ENCODE measurements at regions of chr22 and their contacts with region 1.

Region 1: DNA sequence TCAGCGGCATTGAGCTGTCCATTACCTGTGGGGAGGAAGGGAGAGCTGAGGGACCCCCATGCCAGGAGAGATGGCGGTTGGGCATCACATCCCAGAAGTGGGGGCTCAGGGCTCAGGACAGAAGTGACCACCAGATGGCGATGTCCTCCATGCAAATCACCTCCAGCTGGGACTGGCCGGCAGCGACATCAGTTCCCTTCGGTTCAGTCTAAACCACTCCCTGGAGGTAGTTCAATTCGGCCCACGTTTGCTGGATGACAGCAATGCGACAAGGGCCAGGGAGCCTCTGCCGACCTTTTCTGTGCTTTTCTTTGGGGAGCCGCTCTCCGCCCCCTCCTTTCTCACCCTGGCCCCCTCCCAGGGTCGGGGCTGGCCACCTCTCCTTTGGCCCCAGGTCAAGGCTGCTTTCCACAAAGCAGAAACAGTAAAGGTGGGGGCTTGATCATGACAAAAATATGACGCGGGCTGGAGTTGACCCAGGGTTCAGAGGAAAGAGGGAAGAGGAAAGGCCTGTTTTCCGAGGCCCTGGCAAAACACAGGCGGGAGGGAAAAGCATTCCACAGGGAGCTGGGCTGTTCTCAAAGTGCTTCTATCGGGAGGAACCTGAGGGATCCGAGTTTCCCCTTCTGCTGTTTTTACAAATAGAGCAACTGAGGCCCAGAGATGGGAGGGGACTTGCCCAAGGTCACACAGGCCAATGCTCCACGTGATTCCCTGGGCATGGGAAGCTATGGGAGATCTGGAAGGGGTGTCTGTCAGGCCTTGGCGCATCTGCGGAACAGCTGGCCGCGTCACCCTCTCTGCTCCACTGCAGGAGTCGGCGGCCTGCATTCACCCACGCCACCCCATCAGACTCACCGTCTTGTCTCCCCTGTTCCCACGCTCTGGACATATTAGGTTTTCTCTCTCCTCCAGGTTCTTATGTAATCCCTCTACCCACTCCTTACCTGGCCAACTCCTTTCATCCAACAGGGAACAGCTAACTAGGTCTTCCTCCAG is 54.7 kb downstream of the FBXO7 start:
- DNase-seq: peak; percentile 90
- H3K4me3 ChIP-seq: no peak overlapping the region
- H3K27ac ChIP-seq: no peak overlapping the region
- H3K4me1 ChIP-seq: peaks cover 10 to 14% of the 10 kb centered on the region in 2 experiments; a peak in 3 of 4 replicates
- H3K27me3 ChIP-seq: no peaks in the 10 kb centered on the region
- CTCF ChIP-seq: peak; percentile 86
- EP300 ChIP-seq: no peak
- RAD21 ChIP-seq: peak; percentile 97

Region 2: GRCh38 chr22:32518848-32519247 is 10.4 kb before region 1 on chr22:
- CTCF ChIA-PET with region 1: interaction called, 41 read pairs
- POLR2A ChIA-PET with region 1: no interaction called
- DNase-seq: no peak
- H3K4me3 ChIP-seq: no peak overlapping the region
- H3K27ac ChIP-seq: no peak overlapping the region
- H3K4me1 ChIP-seq: peaks cover 0 to 2% of the 10 kb centered on the region in 2 experiments; a peak in 1 of 4 replicates
- H3K27me3 ChIP-seq: no peaks in the 10 kb centered on the region
- CTCF ChIP-seq: peak; percentile 26; the same call in 1 of the 2 replicates
- EP300 ChIP-seq: no peak
- RAD21 ChIP-seq: no peak

Region 3: DNA sequence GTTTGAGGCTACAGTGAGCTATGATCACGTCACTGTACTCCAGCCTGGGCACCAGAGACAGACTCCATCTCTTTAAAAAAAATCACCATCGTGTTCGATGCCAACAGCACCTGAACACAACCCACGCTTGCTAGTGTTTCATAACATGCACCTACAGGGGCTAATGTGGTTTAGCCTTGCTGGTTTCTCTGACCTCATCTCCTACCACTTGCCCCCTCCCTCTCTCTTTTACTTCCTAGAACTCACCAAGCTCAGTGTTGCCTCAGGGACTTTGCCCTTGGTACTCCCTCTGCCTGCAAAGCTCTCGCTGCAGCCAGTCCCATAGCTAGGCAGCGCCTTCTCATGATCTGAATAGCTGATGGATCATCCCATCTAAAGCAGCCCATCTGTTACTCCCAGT is 45.1 kb after region 1 on chr22:
- CTCF ChIA-PET with region 1: interaction called, 14 read pairs
- POLR2A ChIA-PET with region 1: no interaction called
- DNase-seq: no peak
- H3K4me3 ChIP-seq: no peak overlapping the region
- H3K27ac ChIP-seq: no peak overlapping the region
- H3K4me1 ChIP-seq: peaks cover 0 to 21% of the 10 kb centered on the region in 2 experiments; a peak in 2 of 4 replicates
- H3K27me3 ChIP-seq: no peaks in the 10 kb centered on the region
- CTCF ChIP-seq: no peak
- EP300 ChIP-seq: no peak
- RAD21 ChIP-seq: no peak

Region 4: GRCh38 chr22:32637951-32638350 is 108.7 kb after region 1 on chr22:
- CTCF ChIA-PET with region 1: no interaction called
- POLR2A ChIA-PET with region 1: no interaction called
- DNase-seq: no peak
- H3K4me3 ChIP-seq: no peak overlapping the region
- H3K27ac ChIP-seq: no peak overlapping the region
- H3K4me1 ChIP-seq: no peaks in the 10 kb centered on the region; a peak in 1 of 4 replicates
- H3K27me3 ChIP-seq: no peaks in the 10 kb centered on the region
- CTCF ChIP-seq: no peak
- EP300 ChIP-seq: no peak
- RAD21 ChIP-seq: no peak

Region 5: GRCh38 chr22:32796865-32797573 is 267.7 kb after region 1 on chr22:
- CTCF ChIA-PET with region 1: interaction called, 93 read pairs
- POLR2A ChIA-PET with region 1: no interaction called
- DNase-seq: peak; percentile 76
- H3K4me3 ChIP-seq: peak overlapping the region in 1 of 2 experiments; percentile 11; a peak in 1 of 4 replicates
- H3K27ac ChIP-seq: no peak overlapping the region
- H3K4me1 ChIP-seq: peaks cover 0 to 8% of the 10 kb centered on the region in 2 experiments; a peak in 1 of 4 replicates
- H3K27me3 ChIP-seq: no peaks in the 10 kb centered on the region
- CTCF ChIP-seq: peak; percentile 87
- EP300 ChIP-seq: no peak
- RAD21 ChIP-seq: peak; percentile 79

Region 6: DNA sequence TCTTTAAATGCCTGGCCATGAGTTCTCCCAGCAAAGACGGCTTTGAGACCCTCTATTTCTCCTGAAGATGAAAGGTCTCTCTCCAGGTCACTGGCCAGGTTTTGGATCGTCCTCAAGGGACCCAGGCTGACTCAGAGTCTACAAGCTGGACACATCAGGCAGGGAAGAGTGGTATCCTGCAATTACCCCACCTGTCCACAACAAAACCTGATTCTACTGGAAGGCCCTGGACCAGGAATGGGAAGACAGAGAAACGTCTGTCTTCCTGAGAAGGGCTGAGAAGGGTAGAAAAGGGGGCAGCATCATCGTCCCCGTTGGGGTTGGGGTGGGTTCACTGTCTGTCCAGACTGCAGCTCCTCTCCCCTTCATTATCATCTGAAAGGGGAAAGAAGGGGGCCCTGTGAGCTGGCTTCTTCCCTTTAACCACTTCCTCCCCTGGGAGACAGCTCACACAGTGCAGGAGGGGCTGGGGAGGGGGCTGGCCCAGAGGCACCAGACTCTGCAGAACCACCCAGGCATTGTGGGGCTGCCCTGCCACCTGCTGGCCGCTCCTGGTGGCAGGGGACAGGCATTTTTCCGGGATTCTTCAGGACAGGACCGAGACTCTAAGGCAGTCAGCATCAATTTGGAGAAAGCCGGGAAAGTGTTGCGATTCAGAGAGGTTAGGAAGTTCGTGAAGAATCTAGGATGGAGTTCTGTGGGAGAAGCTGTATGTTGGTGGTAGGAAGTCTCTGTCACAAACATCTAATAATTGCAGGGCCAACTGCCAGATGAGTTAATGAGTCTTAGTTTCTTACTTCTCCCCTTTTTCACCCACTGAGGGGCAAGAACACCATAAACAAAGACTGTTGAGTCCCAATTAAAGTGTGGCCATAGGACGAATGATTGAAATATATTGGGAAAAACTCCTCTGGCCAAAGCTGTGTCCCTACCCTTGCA is 471.3 kb after region 1 on chr22:
- CTCF ChIA-PET with region 1: interaction called, 241 read pairs
- POLR2A ChIA-PET with region 1: no interaction called
- DNase-seq: peak; percentile 82
- H3K4me3 ChIP-seq: no peak overlapping the region; a peak in 1 of 4 replicates
- H3K27ac ChIP-seq: no peak overlapping the region
- H3K4me1 ChIP-seq: no peaks in the 10 kb centered on the region; a peak in 1 of 4 replicates
- H3K27me3 ChIP-seq: no peaks in the 10 kb centered on the region
- CTCF ChIP-seq: peak; percentile 84
- EP300 ChIP-seq: no peak
- RAD21 ChIP-seq: peak; percentile 94

Region 7: GRCh38 chr22:33057363-33057995 is 528.2 kb after region 1 on chr22:
- CTCF ChIA-PET with region 1: interaction called, 38 read pairs
- POLR2A ChIA-PET with region 1: no interaction called
- DNase-seq: no peak
- H3K4me3 ChIP-seq: peak overlapping the region in 1 of 2 experiments; percentile 46; a peak in 2 of 4 replicates
- H3K27ac ChIP-seq: no peak overlapping the region
- H3K4me1 ChIP-seq: peaks cover 0 to 2% of the 10 kb centered on the region in 2 experiments; a peak in 1 of 4 replicates
- H3K27me3 ChIP-seq: no peaks in the 10 kb centered on the region; the same call in 1 of the 2 replicates
- CTCF ChIP-seq: no peak
- EP300 ChIP-seq: no peak
- RAD21 ChIP-seq: no peak

Measured in SK-N-SH (cell line).